ENCODE measurements at regions of chr19 and their contacts with region 1.

Region 1: GRCh38 chr19:39970675-39971379 is at the start of gene PSMC4:
- DNase-seq: peak; percentile 97

Region 2: DNA sequence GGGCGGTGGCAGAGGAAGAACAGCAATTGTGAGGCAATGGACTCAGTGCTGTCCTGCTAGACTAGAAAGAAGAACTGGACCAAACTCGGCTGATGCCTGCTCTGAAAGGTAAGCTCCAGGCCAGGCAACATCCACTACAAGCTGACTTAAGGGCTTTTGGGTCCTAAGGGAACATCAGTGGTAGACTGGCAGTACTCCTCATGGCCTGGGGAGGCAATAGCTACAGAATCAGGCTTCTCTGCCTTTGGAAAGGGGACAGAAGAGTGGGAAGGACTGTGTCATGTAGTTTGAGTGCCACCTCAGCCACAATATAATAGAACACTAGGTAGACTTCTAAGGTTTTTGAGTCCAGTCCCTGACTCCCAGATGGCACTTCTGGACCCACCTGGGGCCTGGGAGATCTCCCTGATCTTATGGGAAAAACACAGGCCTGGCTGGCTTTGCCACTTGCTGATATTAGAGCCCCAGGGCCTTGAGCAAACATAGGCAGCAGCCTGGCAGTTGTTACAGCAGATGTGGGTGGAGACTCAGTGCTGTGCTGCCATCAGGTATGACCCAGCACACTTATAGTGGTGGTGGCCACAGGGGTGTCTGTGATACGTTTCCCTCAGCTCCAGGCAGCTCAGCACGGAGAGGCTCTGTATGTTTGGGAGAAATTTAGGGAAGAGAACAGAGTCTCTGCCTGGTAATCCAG is 223.8 kb before region 1 on chr19:
- CTCF ChIA-PET with region 1: no interaction called
- POLR2A ChIA-PET with region 1: no interaction called
- DNase-seq: no peak

Region 3: DNA sequence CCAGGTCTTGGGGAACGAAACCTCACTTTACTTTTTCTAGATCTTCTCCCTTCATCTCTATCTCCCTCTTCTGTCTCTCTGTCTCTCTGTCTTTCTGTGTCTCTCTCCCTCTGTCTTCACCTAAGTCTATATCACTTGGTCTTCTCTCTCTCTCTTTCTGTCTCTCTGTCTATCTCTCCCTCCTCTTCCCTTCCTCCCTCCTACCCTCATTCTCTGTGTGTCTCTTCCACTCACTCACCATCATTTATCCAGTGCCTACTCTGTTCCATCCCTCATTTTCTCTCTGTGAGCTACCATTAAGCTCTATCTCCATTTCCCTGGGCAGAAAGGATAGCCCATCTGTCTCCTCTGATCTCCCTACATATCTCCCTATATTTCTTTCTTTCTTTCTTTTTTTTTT is 92.4 kb before region 1 on chr19:
- CTCF ChIA-PET with region 1: no interaction called
- POLR2A ChIA-PET with region 1: interaction called, 10 read pairs
- DNase-seq: no peak

Region 4: DNA sequence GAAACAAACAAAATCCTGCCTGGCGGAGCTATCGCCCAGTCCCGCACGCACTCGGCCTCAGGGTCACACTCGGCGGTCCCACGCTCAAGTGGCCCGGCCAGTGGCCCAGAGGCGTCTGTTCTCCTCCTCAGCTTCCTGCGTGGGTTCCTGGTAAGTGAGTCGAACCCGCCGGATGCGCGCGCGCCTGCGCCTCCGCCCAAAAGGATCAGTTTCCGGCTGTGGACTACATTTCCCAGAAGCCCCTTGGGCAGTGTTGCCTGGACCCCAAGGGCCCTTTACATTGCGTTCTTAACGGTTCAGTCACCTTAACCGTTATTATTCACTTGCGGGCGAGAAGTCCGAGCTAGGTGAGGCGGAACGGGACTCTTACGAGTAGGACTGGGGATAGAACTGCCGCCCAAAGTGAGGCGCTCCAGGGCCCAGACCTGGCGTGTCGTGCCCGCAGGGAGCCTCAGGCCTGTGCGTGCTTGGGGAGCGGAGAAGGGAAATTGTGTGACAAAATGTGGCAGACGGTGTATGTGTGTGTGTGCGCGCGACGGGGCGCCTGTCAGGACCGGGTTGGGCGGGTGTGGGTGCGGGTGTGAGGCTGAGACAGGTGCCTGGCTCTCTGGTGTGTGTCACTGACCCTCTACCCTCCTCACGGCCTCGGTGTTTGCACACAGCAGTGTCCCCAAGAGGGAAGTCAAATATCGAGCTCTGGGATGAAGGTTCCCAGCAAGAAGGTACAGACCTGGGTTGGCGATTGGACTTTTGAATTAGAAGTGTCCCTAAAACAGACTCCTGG is 26.2 kb after region 1 on chr19 and contains the start of gene ZNF546:
- CTCF ChIA-PET with region 1: no interaction called
- POLR2A ChIA-PET with region 1: interaction called, 16 read pairs
- DNase-seq: peak; percentile 90

Region 5: DNA sequence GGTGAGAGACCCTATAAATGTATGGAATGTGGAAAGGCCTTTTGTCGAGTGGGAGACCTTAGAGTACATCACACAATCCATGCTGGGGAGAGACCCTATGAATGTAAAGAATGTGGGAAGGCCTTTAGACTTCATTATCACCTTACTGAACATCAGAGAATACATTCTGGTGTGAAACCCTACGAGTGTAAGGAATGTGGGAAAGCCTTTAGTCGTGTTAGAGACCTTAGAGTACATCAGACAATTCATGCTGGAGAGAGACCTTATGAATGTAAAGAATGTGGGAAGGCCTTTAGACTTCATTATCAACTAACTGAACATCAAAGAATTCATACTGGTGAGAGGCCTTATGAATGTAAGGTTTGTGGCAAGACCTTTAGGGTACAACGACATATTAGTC is 43.2 kb after region 1 on chr19:
- CTCF ChIA-PET with region 1: no interaction called
- POLR2A ChIA-PET with region 1: no interaction called
- DNase-seq: no peak